BJ (cell line): ENCODE measurements at regions of chr4 and their contacts with region 1.

Region 1: GRCh38 chr4:140326395-140326993 is 47.0 kb upstream of the SCOC start:
- DNase-seq: no peak
- H3K4me3 ChIP-seq: no peak overlapping the region
- H3K27me3 ChIP-seq: no peaks in the 10 kb centered on the region; the same call in 1 of the 2 replicates
- CTCF ChIP-seq: peak; percentile 83

Region 2: GRCh38 chr4:139734875-139735380 is 591.6 kb before region 1 on chr4:
- CTCF ChIA-PET with region 1: interaction called, 11 read pairs
- POLR2A ChIA-PET with region 1: no interaction called
- DNase-seq: peak; percentile 16
- H3K4me3 ChIP-seq: peak overlapping the region; percentile 41
- H3K27me3 ChIP-seq: peaks cover 3% of the 10 kb centered on the region; the same call in 1 of the 2 replicates
- CTCF ChIP-seq: peak; percentile 66

Region 3: DNA sequence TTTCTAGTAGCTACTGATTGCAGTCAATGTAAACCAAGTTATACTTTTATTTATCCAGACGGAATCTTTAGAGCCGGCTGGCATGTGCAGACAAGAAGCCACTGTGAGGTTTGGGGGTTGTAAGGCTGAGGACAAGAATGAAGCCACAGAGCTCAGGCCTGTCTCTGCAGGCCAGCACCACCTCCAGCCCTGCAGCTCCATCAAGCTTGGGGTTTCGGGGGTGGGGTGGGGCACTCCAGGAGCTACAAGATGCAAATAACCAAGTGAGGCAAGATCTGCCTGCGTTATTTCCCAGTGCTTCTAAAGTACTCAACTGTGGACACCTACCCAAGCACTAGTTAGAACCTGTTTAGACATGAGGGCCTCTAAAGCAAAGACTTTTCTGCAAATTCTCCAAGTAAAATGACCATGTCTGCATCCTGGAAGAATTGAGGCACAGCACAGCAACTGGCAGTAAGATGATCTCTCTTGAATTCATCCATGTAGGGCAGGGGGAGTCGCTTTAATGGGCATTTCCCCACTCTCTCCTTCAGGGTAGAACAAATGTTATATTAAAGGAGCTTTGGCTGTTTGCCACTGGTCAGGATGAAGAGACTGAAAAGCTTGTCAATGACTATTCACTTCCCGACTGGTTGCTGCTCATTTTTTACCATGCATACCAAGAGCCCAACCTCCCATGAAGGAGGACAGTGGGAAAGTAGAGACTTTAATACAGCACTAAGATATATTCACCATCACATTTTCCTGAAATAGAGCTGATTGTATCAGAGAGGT is 438.3 kb before region 1 on chr4:
- CTCF ChIA-PET with region 1: no interaction called
- POLR2A ChIA-PET with region 1: no interaction called
- DNase-seq: no peak
- H3K4me3 ChIP-seq: no peak overlapping the region
- H3K27me3 ChIP-seq: no peaks in the 10 kb centered on the region
- CTCF ChIP-seq: no peak

Region 4: DNA sequence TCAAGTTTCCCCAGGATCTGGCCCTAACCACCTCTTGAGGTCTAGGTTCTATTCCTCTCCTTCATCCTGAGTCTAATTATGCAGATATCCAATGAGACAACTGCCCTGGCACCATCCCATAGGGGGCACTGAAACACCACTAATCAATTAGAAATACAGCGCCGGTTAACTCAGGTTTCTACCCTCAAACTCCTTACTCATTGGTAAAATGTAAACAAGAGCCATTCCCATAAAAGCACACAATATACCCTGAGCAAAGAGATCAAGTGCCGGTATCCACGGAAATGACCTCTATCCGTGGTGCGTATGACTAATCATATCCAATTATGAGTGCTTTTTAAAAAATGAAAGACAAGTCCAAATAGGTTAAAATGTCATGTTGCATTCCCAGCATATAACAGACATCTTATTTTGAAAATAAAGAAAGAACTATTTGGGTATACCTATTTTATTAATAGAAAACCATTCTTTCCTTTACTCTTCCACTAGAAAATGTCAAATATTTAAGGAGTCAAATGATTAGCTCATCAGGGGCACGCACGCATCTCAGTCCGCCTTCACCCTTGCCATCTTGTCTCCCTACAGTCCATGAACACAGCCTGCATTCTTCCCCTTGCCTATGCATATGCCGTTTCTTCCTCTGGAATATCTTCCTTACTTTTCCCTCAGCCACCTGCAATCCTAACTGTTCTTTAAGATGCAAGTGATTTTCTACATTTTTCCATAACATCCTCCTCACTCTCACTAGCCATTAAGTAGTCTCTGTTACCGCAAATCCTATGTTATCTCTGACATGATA is 313.6 kb before region 1 on chr4:
- CTCF ChIA-PET with region 1: interaction called, 29 read pairs
- POLR2A ChIA-PET with region 1: no interaction called
- DNase-seq: peak; percentile 9
- H3K4me3 ChIP-seq: no peak overlapping the region
- H3K27me3 ChIP-seq: no peaks in the 10 kb centered on the region
- CTCF ChIP-seq: peak; percentile 63

Region 5: GRCh38 chr4:140609548-140610425 is 283.3 kb after region 1 on chr4:
- CTCF ChIA-PET with region 1: interaction called, 10 read pairs
- POLR2A ChIA-PET with region 1: no interaction called
- DNase-seq: no peak
- H3K4me3 ChIP-seq: no peak overlapping the region
- H3K27me3 ChIP-seq: no peaks in the 10 kb centered on the region; the same call in 1 of the 2 replicates
- CTCF ChIP-seq: peak; percentile 56